Activated T-helper 1 cell treated with anti-CD3 and anti-CD28 coated beads, Interleukin-12 subunit alpha, Interleukin-12 subunit beta, Interleukin-2, Interleukin-4 antibody, amounts not matched to agents 30 ng/mL and 10 ng/mL and 1 ng/mL, durations not matched to agents 14 hours and 24 hours and 36 hours (primary cell): ENCODE measurements at regions of chr1 and their contacts with region 1.

Region 1: DNA sequence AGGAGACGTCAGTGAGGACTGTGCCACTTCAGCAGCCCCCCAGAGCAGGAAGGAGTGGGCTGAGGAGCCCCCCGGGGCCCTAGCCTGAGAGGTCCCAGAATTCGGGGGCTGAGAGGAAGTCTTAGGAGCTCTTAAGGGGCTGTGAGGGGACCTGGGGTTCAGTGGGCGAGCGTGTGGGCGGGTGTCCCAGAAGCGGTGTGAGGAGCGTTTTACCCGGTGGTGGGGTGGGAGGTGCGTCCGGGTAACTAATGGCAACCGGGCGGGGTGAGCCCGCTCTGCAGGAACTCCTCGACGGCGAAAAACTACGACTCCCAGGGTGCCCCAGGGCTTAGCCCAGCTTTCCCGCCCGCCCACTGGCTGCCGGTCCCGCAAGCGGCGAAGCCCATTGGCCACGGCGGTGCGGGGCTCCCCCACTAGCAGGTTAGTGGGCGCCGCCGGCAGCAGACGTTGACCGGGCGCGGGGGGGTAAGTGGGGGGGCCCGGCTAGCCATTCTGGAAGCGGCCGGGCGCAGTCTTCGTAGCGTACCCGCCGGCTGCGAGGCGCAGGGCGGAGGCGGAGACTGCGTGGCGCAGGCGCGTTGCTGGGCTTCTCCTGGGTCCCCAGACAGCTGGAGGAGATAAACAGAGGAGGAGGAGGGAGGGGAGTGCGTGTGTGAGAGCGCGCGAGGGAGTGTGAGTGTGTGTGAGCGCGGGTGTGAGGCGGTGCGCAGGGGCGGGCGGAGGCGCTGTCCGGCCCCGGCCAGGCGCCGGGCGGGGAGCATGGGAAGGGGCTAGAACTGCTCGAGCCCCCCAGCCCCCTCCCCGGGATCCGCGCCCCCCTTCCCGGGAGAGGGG is at the start of gene WDTC1:
- DNase-seq: peak; percentile 98
- H3K4me3 Mint-ChIP-seq: peak within 1 kb of the TSS; percentile 99
- H3K27ac Mint-ChIP-seq: peak within 1 kb of the TSS; percentile 97
- H3K4me1 Mint-ChIP-seq: peaks cover 27% of the 10 kb centered on the region
- H3K27me3 Mint-ChIP-seq: no peaks in the 10 kb centered on the region
- total RNA-seq, gene WDTC1: 18.4 and 20.1 TPM in 2 replicates

Region 2: DNA sequence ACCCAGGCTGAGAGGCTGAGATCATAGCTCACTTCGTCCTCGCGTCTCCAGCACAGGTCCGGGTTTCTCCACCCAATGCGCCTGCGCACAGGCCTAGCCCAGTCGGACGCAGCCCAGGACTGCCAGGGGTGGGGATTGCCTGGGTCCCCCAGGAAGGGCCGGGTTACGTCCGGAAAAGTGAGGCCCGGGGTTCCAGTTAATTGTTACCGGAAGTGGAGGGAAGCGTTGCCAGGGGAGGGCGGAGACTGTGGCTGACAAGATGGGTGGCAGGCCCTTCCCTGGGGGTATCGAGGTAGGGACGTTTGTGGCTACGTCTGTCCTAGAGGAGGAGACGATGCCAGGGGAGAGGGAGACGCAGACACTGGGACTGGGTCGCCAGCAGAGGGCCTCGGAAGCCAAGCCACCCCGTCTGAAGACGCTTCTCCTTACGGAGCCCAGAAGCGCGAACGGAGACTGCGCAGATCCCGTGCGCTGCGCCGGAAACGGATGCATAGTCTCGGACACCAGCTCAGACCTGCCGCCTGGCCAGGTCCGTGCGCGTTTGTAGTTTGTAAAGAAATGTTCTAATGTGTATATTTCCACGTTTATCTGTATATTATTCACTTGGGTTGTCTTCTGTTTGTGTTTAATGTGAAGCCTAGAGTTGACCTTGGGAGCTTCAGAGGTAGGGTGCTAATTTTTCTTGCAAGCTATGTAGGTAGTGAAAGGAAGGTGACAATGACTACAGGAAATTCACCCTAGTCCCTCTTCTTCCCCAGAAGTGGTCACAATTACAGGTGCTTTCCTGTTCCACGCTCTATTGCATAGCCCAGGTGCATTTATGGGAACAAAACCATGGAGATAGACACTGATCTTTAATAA is 1994.4 kb before region 1 on chr1:
- intact Hi-C with region 1: loop called (anchors 10 kb)
- DNase-seq: peak; percentile 88
- H3K4me3 Mint-ChIP-seq: peak overlapping the region; percentile 83
- H3K27ac Mint-ChIP-seq: peak overlapping the region; percentile 91
- H3K4me1 Mint-ChIP-seq: peaks cover 63% of the 10 kb centered on the region
- H3K27me3 Mint-ChIP-seq: no peaks in the 10 kb centered on the region

Region 3: DNA sequence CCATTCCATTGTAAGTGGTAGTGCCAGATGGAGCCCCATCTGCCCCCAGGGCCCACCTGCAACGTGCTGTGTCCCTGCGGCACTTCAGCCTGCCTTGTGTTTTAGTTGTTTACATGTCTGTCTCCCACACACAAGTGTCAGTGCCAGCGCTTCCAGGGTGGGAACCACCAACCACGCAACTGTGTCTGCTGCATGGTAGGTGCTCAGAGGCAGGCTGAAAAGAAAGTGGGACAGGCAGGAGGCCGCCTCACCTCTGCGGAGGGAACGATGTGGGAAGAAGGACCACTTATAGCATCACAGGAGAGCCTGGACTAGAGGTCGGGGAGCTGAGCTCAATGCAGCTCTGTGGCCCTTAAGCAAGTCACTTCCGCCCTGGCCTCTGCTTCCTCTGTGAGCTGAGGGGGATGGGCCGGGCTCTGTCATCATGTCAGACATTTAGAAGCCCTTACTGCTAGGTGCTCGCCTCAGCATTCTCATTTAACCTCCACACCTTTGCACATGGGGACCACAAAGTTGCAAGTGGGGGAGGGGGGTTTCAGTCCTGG is 97.2 kb before region 1 on chr1:
- intact Hi-C with region 1: loop called (anchors 1 kb)
- DNase-seq: peak; percentile 71
- H3K4me3 Mint-ChIP-seq: peak overlapping the region; percentile 84
- H3K27ac Mint-ChIP-seq: peak overlapping the region; percentile 99
- H3K4me1 Mint-ChIP-seq: peaks cover 57% of the 10 kb centered on the region
- H3K27me3 Mint-ChIP-seq: no peaks in the 10 kb centered on the region

Region 4: DNA sequence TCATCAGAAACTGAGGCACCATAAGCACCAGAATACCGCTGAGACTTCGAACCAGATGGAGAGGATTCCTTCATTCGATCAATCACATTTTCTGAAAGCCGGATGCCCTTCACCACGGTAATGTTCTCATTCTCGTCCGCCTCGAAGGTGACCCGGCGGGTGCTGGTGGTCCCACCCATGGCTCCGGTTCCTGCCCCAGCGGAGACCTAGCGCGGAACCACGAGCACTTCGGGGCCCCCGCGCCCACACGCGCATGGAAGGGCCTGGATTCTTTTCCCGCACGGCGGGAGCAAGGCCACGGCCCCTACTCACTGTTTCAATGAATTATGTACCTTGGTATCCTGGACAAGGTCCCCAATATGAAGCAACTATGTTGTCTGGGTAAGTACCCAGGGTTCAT is 33.0 kb before region 1 on chr1:
- intact Hi-C with region 1: loop called (anchors 1 kb)
- DNase-seq: no peak
- H3K4me3 Mint-ChIP-seq: no peak overlapping the region
- H3K27ac Mint-ChIP-seq: no peak overlapping the region
- H3K4me1 Mint-ChIP-seq: peaks cover 6% of the 10 kb centered on the region
- H3K27me3 Mint-ChIP-seq: peaks cover 6% of the 10 kb centered on the region

Region 5: DNA sequence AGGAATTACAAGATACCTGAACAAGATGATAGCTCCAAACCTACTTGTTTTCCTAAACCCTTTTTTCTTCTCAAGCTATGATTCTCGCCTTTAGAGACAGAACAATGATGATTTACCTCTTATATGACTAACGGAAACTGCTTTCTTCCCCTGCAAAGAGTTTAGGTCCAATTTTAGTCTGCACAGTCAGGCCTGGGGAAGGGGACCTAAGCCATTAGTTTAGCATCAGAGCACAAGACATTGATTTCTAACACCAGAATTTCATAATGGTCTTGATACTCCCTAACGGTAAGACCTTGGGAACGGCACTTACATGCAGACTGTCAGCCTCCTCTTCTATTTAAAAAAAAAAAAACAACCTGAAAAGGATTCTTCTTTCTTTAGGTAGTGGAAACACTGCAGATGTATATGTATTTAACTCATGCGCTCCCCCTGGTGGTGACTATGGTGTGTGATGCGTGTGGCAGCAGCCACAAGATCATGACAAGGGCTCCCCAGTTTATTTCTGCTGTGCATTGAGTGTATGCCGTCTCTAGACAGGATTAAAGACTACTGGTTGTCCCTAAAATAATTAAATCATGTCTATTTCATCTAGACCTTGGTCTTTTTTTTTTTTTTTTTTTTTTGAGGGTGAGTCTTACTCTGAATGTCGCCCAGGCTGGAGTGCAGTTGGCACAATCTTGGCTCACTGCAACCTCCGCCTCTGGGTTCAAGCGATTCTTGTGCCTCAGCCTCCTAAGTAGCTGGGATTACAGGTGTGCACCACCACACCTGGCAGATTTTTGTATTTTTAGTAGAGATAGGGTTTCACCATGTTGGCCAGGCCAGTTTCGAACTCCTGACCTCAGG is 50.4 kb after region 1 on chr1:
- intact Hi-C with region 1: loop called (anchors 1 kb)
- DNase-seq: peak; percentile 74
- H3K4me3 Mint-ChIP-seq: no peak overlapping the region
- H3K27ac Mint-ChIP-seq: no peak overlapping the region
- H3K4me1 Mint-ChIP-seq: peaks cover 6% of the 10 kb centered on the region
- H3K27me3 Mint-ChIP-seq: peaks cover 4% of the 10 kb centered on the region

Region 6: DNA sequence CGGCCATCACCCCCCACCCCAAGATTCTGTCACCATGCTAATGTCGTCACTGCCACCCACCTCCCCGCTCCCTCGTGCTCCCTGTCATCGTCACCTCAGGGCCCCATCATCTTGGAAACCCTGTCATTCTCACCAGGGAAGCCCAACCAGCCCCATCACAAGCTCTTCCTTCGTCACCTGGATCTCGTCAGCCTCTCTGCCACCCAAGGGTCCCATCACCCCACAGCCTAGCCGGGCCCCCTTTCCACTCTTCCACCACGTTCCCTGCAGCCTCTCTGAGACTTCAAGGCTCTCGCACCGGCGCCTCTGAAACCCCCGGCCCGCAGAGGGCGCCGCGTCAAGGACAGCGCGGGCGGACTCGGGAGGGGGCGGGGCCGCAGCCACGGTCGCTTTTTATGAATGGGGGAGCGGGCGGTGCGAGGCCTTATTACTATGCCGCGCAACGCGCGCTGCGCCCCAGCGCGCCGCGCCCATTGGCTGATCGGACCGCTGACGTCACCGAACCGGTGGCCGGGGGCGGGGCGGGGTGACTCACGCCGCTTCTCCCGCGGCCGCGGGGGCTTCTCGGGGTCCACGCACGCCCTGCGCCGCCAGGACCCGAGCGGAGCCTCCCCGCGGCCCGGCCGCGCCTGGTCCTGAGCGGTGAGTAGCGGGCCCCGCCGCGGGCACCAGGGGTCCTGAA is 158.0 kb after region 1 on chr1 and contains the start of gene GPR3:
- intact Hi-C with region 1: loop called (anchors 1 kb)
- DNase-seq: peak; percentile 91
- H3K4me3 Mint-ChIP-seq: peak within 1 kb of the TSS; percentile 82
- H3K27ac Mint-ChIP-seq: peak within 1 kb of the TSS; percentile 93
- H3K4me1 Mint-ChIP-seq: peaks cover 12% of the 10 kb centered on the region
- H3K27me3 Mint-ChIP-seq: peaks cover 12% of the 10 kb centered on the region
- total RNA-seq, gene GPR3: 3.2 and 4.0 TPM in 2 replicates

Region 7: GRCh38 chr1:27725374-27726173 is 491.3 kb after region 1 on chr1 and contains the start of gene FAM76A:
- intact Hi-C with region 1: loop called (anchors 10 kb)
- DNase-seq: peak; percentile 99
- H3K4me3 Mint-ChIP-seq: peak within 1 kb of the TSS; percentile 86
- H3K27ac Mint-ChIP-seq: peak within 1 kb of the TSS; percentile 97
- H3K4me1 Mint-ChIP-seq: peaks cover 29% of the 10 kb centered on the region
- H3K27me3 Mint-ChIP-seq: no peaks in the 10 kb centered on the region
- total RNA-seq, gene FAM76A: 9.9 and 13.1 TPM in 2 replicates